ENCODE measurements at regions of chr14 and their contacts with region 1.

Region 1: GRCh38 chr14:63543000-63543825 is at the start of gene PPP2R5E:
- DNase-seq: peak; percentile 99
- H3K4me3 Mint-ChIP-seq: peak within 1 kb of the TSS; percentile 96
- H3K27ac Mint-ChIP-seq: peak within 1 kb of the TSS; percentile 83
- H3K4me1 Mint-ChIP-seq: peaks cover 25% of the 10 kb centered on the region
- H3K27me3 Mint-ChIP-seq: no peaks in the 10 kb centered on the region
- total RNA-seq, gene PPP2R5E: 30.0 to 32.5 TPM

Region 2: DNA sequence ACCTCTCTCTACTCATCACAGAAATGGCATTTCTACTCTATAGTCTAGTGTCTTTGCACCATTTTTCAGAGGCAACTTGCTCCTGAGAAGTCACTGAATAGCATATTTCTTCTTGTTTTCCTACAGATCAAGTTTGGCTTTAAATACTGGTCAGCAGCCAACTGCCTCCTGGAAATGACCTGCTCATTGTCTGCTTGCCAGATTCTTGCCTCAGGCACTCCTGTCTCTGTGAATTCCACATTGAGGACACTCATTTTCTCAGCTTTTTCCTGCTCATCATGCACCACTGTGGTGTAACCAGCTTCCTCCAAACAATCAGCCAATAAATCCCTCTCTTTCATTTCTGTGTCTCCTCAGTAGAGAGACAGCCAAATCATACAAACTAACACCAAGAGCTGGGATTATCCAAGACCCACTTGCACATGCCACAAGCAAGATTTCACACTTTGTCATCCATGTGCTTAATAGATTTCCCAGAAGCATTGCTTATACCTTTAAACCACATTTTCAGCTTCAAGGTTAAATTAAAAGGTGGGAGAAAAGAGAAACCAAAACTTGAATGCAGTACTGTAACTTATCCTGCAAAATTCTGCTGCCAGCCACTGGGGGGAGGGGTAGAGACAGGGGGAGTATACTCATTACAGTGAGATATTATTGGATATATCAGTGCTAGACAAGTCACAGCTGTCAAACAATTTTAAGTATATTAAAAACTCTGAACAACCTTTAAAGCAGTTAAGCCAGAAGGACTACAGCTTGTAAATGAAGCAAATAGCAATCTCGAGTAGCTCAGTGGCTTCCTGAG is 105.1 kb before region 1 on chr14:
- CTCF ChIA-PET with region 1: no interaction called
- intact Hi-C with region 1: loop called (anchors 1 kb)
- DNase-seq: peak; percentile 47
- H3K4me3 Mint-ChIP-seq: no peak overlapping the region
- H3K27ac Mint-ChIP-seq: no peak overlapping the region
- H3K4me1 Mint-ChIP-seq: peaks cover 55% of the 10 kb centered on the region
- H3K27me3 Mint-ChIP-seq: no peaks in the 10 kb centered on the region

Region 3: DNA sequence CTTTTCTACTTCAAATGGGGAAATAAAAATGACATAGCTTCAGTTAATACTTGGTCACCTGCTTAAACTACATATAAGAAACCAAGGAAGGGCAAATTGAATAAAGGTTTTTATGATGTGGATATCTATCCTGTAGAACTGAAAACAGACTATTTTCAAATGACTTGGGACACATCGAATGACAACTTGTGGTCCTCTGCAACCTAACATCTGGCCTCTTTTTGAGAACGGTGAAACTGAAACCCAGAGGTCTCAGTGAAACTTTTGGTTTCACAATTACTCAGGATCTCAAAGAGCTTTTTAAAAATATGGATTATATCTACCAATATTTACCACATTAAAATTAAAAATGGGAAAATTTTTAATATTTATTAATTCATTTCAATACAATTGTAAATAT is 65.2 kb before region 1 on chr14:
- CTCF ChIA-PET with region 1: no interaction called
- intact Hi-C with region 1: loop called (anchors 2 kb)
- DNase-seq: peak; percentile 42
- H3K4me3 Mint-ChIP-seq: no peak overlapping the region
- H3K27ac Mint-ChIP-seq: no peak overlapping the region
- H3K4me1 Mint-ChIP-seq: peaks cover 49% of the 10 kb centered on the region
- H3K27me3 Mint-ChIP-seq: no peaks in the 10 kb centered on the region

Region 4: GRCh38 chr14:63641473-63642228 is 98.4 kb after region 1 on chr14 and contains the start of gene WDR89:
- CTCF ChIA-PET with region 1: no interaction called
- intact Hi-C with region 1: loop called (anchors 1 kb)
- DNase-seq: peak; percentile 98
- H3K4me3 Mint-ChIP-seq: peak within 1 kb of the TSS; percentile 76
- H3K27ac Mint-ChIP-seq: peak within 1 kb of the TSS; percentile 91
- H3K4me1 Mint-ChIP-seq: peaks cover 48% of the 10 kb centered on the region
- H3K27me3 Mint-ChIP-seq: no peaks in the 10 kb centered on the region
- total RNA-seq, gene WDR89: 26.7 to 27.7 TPM

Region 5: GRCh38 chr14:63770187-63770807 is 227.1 kb after region 1 on chr14:
- CTCF ChIA-PET with region 1: no interaction called
- intact Hi-C with region 1: loop called (anchors 1 kb)
- DNase-seq: peak; percentile 72
- H3K4me3 Mint-ChIP-seq: no peak overlapping the region
- H3K27ac Mint-ChIP-seq: no peak overlapping the region
- H3K4me1 Mint-ChIP-seq: no peaks in the 10 kb centered on the region
- H3K27me3 Mint-ChIP-seq: no peaks in the 10 kb centered on the region